ENCODE measurements at regions of chr7 and their contacts with region 1.

Region 1: GRCh38 chr7:77798394-77799077 is at the starts of genes PHTF2 and TMEM60:
- DNase-seq: peak; percentile 100
- ATAC-seq: peak; percentile 97
- H3K4me3 ChIP-seq: peak within 1 kb of the TSS; percentile 80 to 99
- H3K27ac ChIP-seq: peak within 1 kb of the TSS; percentile 98
- H3K4me1 ChIP-seq: peaks cover 26% of the 10 kb centered on the region
- H3K27me3 ChIP-seq: no peaks in the 10 kb centered on the region
- CTCF ChIP-seq: no peak; the same call in 1 of the 2 replicates
- total RNA-seq, gene PHTF2: 61.5 TPM
- total RNA-seq, gene TMEM60: 20.4 TPM

Region 2: DNA sequence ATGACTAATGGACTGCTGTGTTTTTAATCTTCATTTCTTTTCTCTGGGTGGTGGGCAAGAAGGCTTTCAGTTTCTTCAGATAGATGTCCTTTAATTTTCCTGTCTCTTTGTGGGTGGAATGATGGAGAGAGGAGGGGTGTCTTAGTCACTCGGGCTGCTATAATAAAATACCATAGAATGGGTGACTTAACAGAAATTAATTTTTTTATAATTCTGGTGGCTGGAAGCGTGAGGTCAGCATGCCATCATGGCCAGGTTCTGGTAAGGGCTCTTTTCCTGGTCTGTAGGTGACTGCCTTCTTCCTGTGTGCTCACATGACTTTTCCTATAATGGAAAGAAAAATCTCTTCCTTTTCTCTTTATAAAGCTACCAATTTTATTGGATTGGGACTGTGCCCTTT is 96.0 kb before region 1 on chr7:
- CTCF ChIA-PET with region 1: interaction called, 13 read pairs
- POLR2A ChIA-PET with region 1: no interaction called
- in situ Hi-C with region 1: no loop called
- intact Hi-C with region 1: no loop called
- DNase-seq: no peak
- ATAC-seq: no peak; the same call in 1 of the 2 replicates
- H3K4me3 ChIP-seq: no peak overlapping the region
- H3K27ac ChIP-seq: no peak overlapping the region
- H3K4me1 ChIP-seq: peaks cover 19% of the 10 kb centered on the region
- H3K27me3 ChIP-seq: no peaks in the 10 kb centered on the region
- CTCF ChIP-seq: no peak

Region 3: DNA sequence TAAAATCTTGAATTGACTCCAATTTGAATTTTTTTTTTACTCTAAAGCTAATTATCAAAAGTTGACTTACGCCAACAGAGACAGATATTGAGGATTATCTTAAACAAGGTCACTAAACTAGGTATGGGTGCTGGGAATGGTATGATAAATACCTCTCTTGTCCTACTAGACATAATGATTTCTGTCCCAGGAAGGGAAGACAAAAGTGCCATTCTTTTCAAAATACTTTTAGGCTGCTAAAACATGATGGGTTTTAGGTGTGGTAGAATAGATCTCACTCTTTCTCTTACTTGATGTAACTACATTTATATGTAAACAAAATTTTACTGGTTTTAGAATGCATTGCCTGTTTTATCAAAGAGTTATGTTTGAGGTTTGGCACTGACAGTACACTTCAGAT is 15.4 kb before region 1 on chr7:
- CTCF ChIA-PET with region 1: no interaction called
- POLR2A ChIA-PET with region 1: no interaction called
- in situ Hi-C with region 1: no loop called
- intact Hi-C with region 1: no loop called
- DNase-seq: no peak
- ATAC-seq: no peak
- H3K4me3 ChIP-seq: no peak overlapping the region
- H3K27ac ChIP-seq: no peak overlapping the region
- H3K4me1 ChIP-seq: no peaks in the 10 kb centered on the region
- H3K27me3 ChIP-seq: no peaks in the 10 kb centered on the region
- CTCF ChIP-seq: no peak

Region 4: GRCh38 chr7:77935652-77936348 is 137.3 kb after region 1 on chr7:
- CTCF ChIA-PET with region 1: no interaction called
- POLR2A ChIA-PET with region 1: no interaction called
- in situ Hi-C with region 1: no loop called
- intact Hi-C with region 1: loop called (anchors 10 kb)
- DNase-seq: no peak
- ATAC-seq: no peak
- H3K4me3 ChIP-seq: no peak overlapping the region
- H3K27ac ChIP-seq: no peak overlapping the region
- H3K4me1 ChIP-seq: no peaks in the 10 kb centered on the region
- H3K27me3 ChIP-seq: no peaks in the 10 kb centered on the region
- CTCF ChIP-seq: peak; percentile 24; the same call in 1 of the 2 replicates

Measured in Panc1 (cell line).